CD8-positive, alpha-beta memory T cell (primary cell): ENCODE measurements at regions of chr2 and their contacts with region 1.

Region 1: GRCh38 chr2:230060672-230061293 is 7.9 kb downstream of the SLC16A14 start:
- DNase-seq: no peak
- H3K4me3 ChIP-seq: no peak overlapping the region
- H3K4me3 Mint-ChIP-seq: no peak overlapping the region
- H3K27ac ChIP-seq: no peak overlapping the region
- H3K27ac Mint-ChIP-seq: peak overlapping the region in 1 of 8 donors; percentile 61
- H3K4me1 ChIP-seq: peaks cover 7% of the 10 kb centered on the region
- H3K4me1 Mint-ChIP-seq: peaks cover 0 to 9% (median 6%) of the 10 kb centered on the region in 3 donors
- H3K27me3 ChIP-seq: no peaks in the 10 kb centered on the region
- H3K27me3 Mint-ChIP-seq: peaks cover 7 to 12% of the 10 kb centered on the region in 2 donors

Region 2: DNA sequence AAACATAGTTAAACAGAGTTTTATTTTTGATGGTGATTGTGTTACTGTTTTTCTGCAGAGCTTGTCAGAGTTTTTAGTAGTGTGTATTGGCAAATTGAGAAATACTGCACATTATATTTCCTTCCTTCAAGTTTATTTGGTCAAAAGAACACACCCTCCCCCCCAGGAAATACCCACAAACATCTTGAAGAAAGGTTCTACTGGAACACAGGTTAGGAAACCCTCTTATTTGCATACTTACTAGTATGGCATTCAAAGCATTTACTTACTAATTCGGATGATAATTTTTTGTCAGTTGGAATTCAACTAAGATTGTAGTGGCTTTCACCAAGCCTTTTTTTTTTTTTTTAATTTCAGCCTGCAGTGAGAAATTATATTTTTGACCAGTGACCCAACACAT is 660.9 kb after region 1 on chr2:
- CTCF ChIA-PET with region 1: no interaction called
- POLR2A ChIA-PET with region 1: interaction called, 10 read pairs
- DNase-seq: peak in 1 of 5 donors; percentile 7
- H3K4me3 ChIP-seq: no peak overlapping the region
- H3K4me3 Mint-ChIP-seq: peak overlapping the region in 5 of 7 donors; percentile 20 to 63 (median 55)
- H3K27ac ChIP-seq: no peak overlapping the region
- H3K27ac Mint-ChIP-seq: peak overlapping the region in 7 of 8 donors; percentile 31 to 75 (median 62)
- H3K4me1 ChIP-seq: peaks cover 78% of the 10 kb centered on the region
- H3K4me1 Mint-ChIP-seq: peaks cover 75 to 95% (median 87%) of the 10 kb centered on the region in 3 donors
- H3K27me3 ChIP-seq: no peaks in the 10 kb centered on the region
- H3K27me3 Mint-ChIP-seq: no peaks in the 10 kb centered on the region